ENCODE measurements at regions of chr15 and their contacts with region 1.

Region 1: DNA sequence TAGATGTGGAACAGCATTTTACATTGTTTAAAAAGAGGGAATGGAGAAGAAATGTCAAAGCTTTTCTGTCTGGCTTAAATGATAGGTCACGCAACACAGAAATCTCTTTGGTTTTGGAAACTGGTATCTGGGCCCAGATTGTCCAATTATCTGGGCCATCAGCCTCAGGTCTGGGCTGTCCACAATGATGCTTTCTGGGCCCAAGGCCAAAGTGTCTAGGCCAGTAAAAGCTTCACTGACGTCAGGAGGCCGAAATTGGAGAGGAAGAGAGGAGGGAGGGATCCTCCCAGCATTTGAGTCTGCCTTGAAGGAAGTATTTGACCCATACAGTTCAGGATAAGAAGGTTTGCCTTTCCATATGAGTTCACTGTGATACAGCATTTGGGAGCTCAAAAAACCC is 60.7 kb upstream of the ALDH1A3 start:
- DNase-seq: peak in 1 of 2 donors; percentile 78
- H3K4me3 ChIP-seq: no peak overlapping the region
- H3K27ac ChIP-seq: no peak overlapping the region
- H3K4me1 ChIP-seq: no peaks in the 10 kb centered on the region
- H3K27me3 ChIP-seq: no peaks in the 10 kb centered on the region
- CTCF ChIP-seq: no peak
- EP300 ChIP-seq: no peak
- POLR2A ChIP-seq: no peak

Region 2: DNA sequence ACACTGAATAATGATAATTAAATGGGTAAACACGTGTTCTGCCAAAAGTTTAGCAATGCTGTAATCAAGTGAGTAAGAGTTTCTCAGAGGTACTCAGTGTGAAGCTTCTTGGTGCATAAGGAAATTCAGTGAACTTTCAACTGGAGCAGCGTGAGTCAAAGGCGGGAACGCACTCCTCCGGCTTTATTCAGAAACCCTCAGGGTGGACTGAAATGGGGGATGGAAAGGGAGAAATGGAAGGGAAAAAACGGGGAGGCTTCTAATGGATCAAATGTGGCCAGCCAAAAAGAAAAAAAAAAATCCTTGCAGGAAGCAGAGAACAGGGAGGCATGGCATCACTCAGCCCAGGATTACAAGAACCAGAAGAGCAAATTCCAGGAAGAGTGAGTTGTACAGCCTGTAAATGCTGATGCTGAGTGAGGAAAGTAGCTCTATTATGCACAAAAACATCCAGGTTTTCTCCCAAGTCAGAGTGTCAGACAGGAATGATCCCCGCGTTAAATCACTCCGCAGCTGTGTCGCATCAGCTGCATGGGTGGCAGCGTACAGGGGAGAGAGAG is 131.3 kb before region 1 on chr15:
- intact Hi-C with region 1: loop called (anchors 10 kb)
- DNase-seq: peak in 1 of 2 donors; percentile 72
- H3K4me3 ChIP-seq: no peak overlapping the region
- H3K27ac ChIP-seq: peak overlapping the region in 4 of 5 donors; percentile 64 to 73 (median 70)
- H3K4me1 ChIP-seq: peaks cover 0 to 11% (median 0%) of the 10 kb centered on the region in 4 donors
- H3K27me3 ChIP-seq: peaks cover 0 to 16% (median 0%) of the 10 kb centered on the region in 3 donors
- CTCF ChIP-seq: no peak
- EP300 ChIP-seq: no peak
- POLR2A ChIP-seq: no peak

Region 3: DNA sequence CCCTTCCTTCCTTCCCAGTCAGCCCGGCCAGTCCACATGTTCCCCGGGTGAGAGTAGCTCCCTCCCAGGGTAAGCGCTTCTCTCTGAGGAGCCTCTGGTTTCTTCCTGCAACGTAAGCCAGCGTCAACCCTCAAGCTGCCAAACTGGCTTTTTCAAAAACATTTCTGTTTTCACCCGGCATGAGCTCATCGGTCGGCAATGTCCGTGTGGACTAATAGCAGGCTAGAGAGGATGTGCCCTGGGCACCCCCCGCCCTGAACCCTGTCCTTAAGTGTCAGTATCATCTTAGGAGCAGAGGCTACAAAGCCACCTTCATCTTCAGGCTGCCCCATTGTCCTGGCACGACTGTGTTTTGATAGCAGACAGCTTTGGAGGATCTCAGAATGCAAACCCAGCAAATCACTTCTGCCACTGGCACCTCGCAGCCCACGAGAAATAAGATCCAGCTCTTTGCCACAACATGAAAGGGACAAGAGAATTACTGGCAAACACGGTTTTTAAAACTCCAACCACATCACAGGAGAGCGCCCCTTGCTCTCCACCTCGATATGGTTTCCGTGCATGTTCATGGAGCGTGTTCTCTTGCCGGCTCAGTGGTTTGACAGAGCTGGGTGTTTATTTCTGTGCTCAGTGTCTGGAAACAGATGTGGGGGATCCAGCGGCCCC is 70.6 kb after region 1 on chr15:
- intact Hi-C with region 1: no loop called
- DNase-seq: peak in 1 of 2 donors; percentile 83
- H3K4me3 ChIP-seq: no peak overlapping the region
- H3K27ac ChIP-seq: peak overlapping the region in 4 of 5 donors; percentile 20 to 59 (median 31)
- H3K4me1 ChIP-seq: peaks cover 0 to 13% (median 5%) of the 10 kb centered on the region in 4 donors
- H3K27me3 ChIP-seq: peaks cover 3 to 88% (median 31%) of the 10 kb centered on the region in 3 donors
- CTCF ChIP-seq: no peak
- EP300 ChIP-seq: no peak
- POLR2A ChIP-seq: no peak

Region 4: GRCh38 chr15:101307048-101307896 is 488.3 kb after region 1 on chr15:
- intact Hi-C with region 1: no loop called
- DNase-seq: no peak
- H3K4me3 ChIP-seq: no peak overlapping the region
- H3K27ac ChIP-seq: no peak overlapping the region
- H3K4me1 ChIP-seq: no peaks in the 10 kb centered on the region
- H3K27me3 ChIP-seq: peaks cover 0 to 14% (median 0%) of the 10 kb centered on the region in 3 donors
- CTCF ChIP-seq: no peak
- EP300 ChIP-seq: no peak
- POLR2A ChIP-seq: no peak